ENCODE measurements at regions of chr7 and their contacts with region 1.

Region 1: DNA sequence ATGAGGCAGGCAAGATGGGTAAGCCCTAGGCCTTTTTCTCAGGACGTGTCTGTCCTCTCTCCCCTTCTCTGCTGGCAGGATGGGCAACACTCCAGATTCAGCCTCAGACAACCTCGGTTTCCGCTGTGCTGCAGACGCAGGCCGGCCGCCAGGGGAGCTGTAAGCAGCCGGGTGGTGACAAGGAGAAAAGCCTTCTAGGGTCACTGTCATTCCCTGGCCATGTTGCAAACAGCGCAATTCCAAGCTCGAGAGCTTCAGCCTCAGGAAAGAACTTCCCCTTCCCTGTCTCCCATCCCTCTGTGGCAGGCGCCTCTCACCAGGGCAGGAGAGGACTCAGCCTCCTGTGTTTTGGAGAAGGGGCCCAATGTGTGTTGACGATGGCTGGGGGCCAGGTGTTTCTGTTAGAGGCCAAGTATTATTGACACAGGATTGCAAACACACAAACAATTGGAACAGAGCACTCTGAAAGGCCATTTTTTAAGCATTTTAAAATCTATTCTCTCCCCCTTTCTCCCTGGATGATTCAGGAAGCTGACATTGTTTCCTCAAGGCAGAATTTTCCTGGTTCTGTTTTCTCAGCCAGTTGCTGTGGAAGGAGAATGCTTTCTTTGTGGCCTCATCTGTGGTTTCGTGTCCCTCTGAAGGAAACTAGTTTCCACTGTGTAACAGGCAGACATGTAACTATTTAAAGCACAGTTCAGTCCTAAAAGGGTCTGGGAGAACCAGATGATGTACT is 13.1 kb downstream of the PHKG1 start:
- DNase-seq: peak; percentile 92
- H3K4me3 ChIP-seq: no peak overlapping the region
- H3K27ac ChIP-seq: peak overlapping the region; percentile 55 to 78
- H3K4me1 ChIP-seq: peaks cover 11 to 34% of the 10 kb centered on the region in 2 experiments; a peak in 3 of 4 replicates
- H3K27me3 ChIP-seq: no peaks in the 10 kb centered on the region
- CTCF ChIP-seq: peak; percentile 82
- EP300 ChIP-seq: peak in 1 of 2 experiments; percentile 60; a peak in 2 of 4 replicates
- RAD21 ChIP-seq: peak; percentile 76

Region 2: DNA sequence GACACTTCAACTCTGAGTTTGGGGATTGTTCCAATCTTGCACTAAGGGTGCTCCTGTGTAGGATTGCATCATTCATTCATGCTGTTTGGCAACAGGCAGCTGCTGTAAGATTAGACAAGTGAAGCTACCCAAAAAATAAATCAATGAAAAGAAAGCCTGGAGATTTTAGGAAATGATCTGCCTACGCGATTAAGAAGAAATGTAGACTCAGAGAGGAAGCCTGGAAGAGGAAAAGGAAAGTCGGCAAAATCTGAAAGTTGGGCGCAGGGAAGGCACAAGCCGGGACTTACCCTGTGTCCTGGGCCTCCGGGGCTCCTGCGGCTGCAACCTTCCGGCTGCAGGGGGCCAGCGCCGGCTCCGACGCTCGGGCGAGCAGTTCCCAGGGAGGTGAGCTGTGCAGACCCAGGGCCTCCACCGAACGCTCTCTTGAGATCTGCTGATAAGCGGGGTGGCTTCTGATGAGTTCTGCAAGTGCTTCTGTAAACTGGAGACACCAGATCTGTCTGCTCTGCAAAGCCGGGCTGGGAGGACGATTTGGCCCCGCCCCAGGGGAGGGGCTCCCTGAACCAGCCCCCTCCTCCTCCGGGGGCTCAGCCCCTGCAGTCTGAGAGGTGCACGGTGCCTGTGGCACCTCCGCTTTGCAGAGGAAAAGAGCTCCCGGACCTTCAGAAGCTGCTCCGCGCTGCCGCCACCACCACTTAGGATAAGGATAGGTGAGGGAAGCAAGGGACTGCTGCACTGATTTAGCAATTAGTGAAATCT is 45.8 kb before region 1 on chr7:
- CTCF ChIA-PET with region 1: interaction called, 10 read pairs
- POLR2A ChIA-PET with region 1: interaction called, 4 read pairs
- DNase-seq: peak; percentile 95
- H3K4me3 ChIP-seq: peak overlapping the region; percentile 53 to 78
- H3K27ac ChIP-seq: peak overlapping the region; percentile 50 to 76; a peak in 3 of 4 replicates
- H3K4me1 ChIP-seq: no peaks in the 10 kb centered on the region; a peak in 1 of 4 replicates
- H3K27me3 ChIP-seq: no peaks in the 10 kb centered on the region
- CTCF ChIP-seq: peak; percentile 53
- EP300 ChIP-seq: no peak; a peak in 2 of 4 replicates
- RAD21 ChIP-seq: peak; percentile 24; the same call in 1 of the 2 replicates

Region 3: DNA sequence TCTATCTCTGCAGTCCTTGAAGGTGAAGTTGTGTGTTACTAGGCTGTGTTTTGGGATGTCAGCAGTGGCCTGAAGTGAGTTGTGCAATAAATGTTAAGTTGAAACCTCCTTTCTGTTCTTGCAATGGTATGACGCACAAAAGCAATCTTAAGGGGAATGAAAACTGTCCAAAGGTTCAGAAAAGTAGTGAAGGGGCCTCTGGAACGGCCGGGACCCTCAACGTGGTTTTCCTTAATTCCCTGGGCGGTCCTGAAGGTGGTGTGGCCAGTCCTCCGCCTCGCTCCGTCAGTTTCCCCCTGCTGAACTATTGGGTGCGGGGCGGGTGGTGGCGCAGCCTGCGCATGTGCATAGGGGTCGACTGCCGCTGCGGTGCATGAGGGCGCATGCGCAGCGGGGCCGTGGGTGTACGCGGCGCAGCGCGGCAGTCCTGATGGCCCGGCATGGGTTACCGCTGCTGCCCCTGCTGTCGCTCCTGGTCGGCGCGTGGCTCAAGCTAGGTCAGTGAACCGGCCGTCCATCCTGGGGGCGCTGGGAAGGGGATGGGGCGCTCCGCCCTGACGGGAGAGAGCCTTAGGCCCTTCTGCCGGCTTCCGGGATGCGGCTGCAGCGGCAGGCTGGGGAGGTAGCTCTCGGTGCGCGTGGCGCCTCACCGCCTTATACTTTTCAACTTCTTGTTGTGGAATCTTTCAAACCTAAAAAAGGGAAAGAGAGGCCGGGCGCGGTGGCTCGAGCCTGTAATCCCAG is 15.6 kb before region 1 on chr7 and contains the start of gene SUMF2:
- CTCF ChIA-PET with region 1: interaction called, 25 read pairs
- POLR2A ChIA-PET with region 1: interaction called, 8 read pairs
- DNase-seq: peak; percentile 99
- H3K4me3 ChIP-seq: peak within 1 kb of the TSS; percentile 70 to 88
- H3K27ac ChIP-seq: peak within 1 kb of the TSS; percentile 78 to 90
- H3K4me1 ChIP-seq: peaks cover 4 to 23% of the 10 kb centered on the region in 2 experiments; a peak in 3 of 4 replicates
- H3K27me3 ChIP-seq: no peaks in the 10 kb centered on the region
- CTCF ChIP-seq: peak; percentile 24; the same call in 1 of the 2 replicates
- EP300 ChIP-seq: 0 out of 4 replicates have a peak, but pooled peaks of 1 of the 2 experiments have one; percentile 16
- RAD21 ChIP-seq: peak; percentile 37; the same call in 1 of the 2 replicates
- polyA plus RNA-seq, gene SUMF2: 130 and 162 TPM in 2 replicates

Region 4: GRCh38 chr7:56092789-56093531 is 13.3 kb after region 1 on chr7 and contains the start of gene PHKG1:
- CTCF ChIA-PET with region 1: interaction called, 30 read pairs
- POLR2A ChIA-PET with region 1: interaction called, 6 read pairs
- DNase-seq: peak; percentile 74
- H3K4me3 ChIP-seq: no peak within 1 kb of the TSS
- H3K27ac ChIP-seq: peak within 1 kb of the TSS; percentile 37 to 58; a peak in 3 of 4 replicates
- H3K4me1 ChIP-seq: peaks cover 5 to 13% of the 10 kb centered on the region in 2 experiments; a peak in 2 of 4 replicates
- H3K27me3 ChIP-seq: no peaks in the 10 kb centered on the region
- CTCF ChIP-seq: peak; percentile 51
- EP300 ChIP-seq: peak in 1 of 2 experiments; percentile 13; a peak in 1 of 4 replicates
- RAD21 ChIP-seq: peak; percentile 51
- polyA plus RNA-seq, gene PHKG1: 0.91 and 2.5 TPM in 2 replicates